CD14-positive monocyte (primary cell): ENCODE measurements at regions of chr2 and their contacts with region 1.

Region 1: GRCh38 chr2:46364797-46365457 is 67.7 kb downstream of the EPAS1 start:
- DNase-seq: peak; percentile 30 to 46 (median 33)
- H3K4me3 ChIP-seq: no peak overlapping the region
- H3K4me3 Mint-ChIP-seq: no peak overlapping the region
- H3K27ac ChIP-seq: no peak overlapping the region
- H3K27ac Mint-ChIP-seq: no peak overlapping the region
- H3K4me1 ChIP-seq: peaks cover 11 to 12% of the 10 kb centered on the region in 2 donors
- H3K4me1 Mint-ChIP-seq: peaks cover 27% of the 10 kb centered on the region
- H3K27me3 ChIP-seq: no peaks in the 10 kb centered on the region
- H3K27me3 Mint-ChIP-seq: peaks cover 0 to 3% (median 2%) of the 10 kb centered on the region in 3 donors
- CTCF ChIP-seq: peak; percentile 90

Region 2: GRCh38 chr2:46002507-46002883 is 362.4 kb before region 1 on chr2:
- intact Hi-C with region 1: loop called in 1 of 2 experiments (anchors 10 kb)
- DNase-seq: no peak
- H3K4me3 ChIP-seq: no peak overlapping the region
- H3K4me3 Mint-ChIP-seq: no peak overlapping the region
- H3K27ac ChIP-seq: no peak overlapping the region
- H3K27ac Mint-ChIP-seq: no peak overlapping the region
- H3K4me1 ChIP-seq: no peaks in the 10 kb centered on the region
- H3K4me1 Mint-ChIP-seq: no peaks in the 10 kb centered on the region
- H3K27me3 ChIP-seq: no peaks in the 10 kb centered on the region
- H3K27me3 Mint-ChIP-seq: no peaks in the 10 kb centered on the region
- CTCF ChIP-seq: no peak

Region 3: DNA sequence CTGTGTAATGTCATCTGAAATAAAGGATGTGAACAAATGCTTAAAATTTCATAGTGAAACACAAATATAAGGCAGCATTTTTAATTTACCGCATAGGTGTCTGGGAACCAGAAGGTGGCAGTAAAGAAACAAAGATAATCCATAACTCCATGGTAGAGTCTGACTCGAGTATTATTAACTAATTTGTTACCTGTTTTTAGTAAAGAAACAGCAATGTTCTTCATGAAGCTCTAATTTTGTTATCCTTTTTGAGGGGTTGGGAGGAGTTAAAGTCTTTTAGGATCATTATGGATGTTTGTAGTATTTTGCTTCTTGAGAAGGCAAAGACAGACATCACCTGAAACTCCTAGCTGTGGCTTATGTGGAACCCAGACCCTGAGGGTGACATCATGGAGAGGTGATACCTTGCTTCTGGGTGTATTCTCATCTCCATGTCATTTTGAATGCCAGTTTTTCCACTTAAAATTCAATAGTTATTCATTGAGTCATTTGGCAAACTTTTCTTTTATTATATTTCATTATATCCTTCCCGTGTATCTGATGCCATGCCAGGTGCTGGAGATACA is 353.9 kb before region 1 on chr2:
- intact Hi-C with region 1: loop called (anchors 10 kb)
- DNase-seq: peak in 2 of 3 donors; percentile 11 to 24
- H3K4me3 ChIP-seq: no peak overlapping the region
- H3K4me3 Mint-ChIP-seq: no peak overlapping the region
- H3K27ac ChIP-seq: no peak overlapping the region
- H3K27ac Mint-ChIP-seq: peak overlapping the region in 1 of 7 donors; percentile 36
- H3K4me1 ChIP-seq: no peaks in the 10 kb centered on the region
- H3K4me1 Mint-ChIP-seq: no peaks in the 10 kb centered on the region
- H3K27me3 ChIP-seq: no peaks in the 10 kb centered on the region
- H3K27me3 Mint-ChIP-seq: no peaks in the 10 kb centered on the region
- CTCF ChIP-seq: peak; percentile 57

Region 4: DNA sequence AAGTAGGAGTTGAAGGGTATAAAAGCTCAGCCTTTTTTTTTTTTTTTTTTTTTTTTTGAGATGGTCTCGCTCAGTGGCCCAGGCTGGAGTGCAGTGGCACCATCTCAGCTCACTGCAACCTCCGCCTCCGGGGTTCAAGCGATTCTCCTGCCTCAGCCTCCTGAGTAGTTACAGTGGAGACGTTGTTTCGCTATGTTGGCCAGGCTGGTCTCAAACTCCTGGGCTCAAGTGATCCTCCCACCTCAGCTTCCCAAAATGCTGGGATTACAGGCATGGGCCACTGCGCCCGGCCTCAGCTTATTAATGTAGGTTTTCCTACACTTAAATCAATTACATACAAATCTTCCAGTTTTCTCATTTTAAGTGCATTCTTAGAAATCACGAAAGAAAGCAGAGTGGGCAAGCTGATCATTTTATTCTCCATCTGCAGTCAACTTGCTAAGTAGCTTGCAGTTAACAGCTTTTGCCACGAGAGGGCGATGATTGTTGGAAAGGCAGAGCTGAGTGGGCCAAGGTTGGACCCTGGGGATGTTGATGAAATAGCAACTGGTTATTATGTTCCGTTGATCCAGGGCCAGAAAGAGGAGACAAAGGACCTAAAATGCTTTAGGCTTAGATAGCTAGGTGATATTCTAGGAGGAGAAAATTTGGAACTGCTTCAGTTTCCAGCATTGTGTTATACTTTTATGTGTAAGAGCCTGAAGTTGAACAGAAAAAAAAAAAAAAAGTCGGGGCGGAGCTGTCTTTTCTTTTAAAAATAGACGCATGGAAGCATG is 302.1 kb before region 1 on chr2:
- intact Hi-C with region 1: loop called in 1 of 2 experiments (anchors 5 kb)
- DNase-seq: peak; percentile 56 to 65 (median 65)
- H3K4me3 ChIP-seq: no peak overlapping the region
- H3K4me3 Mint-ChIP-seq: peak overlapping the region in 1 of 2 donors; percentile 39
- H3K27ac ChIP-seq: no peak overlapping the region
- H3K27ac Mint-ChIP-seq: no peak overlapping the region
- H3K4me1 ChIP-seq: no peaks in the 10 kb centered on the region
- H3K4me1 Mint-ChIP-seq: peaks cover 3% of the 10 kb centered on the region
- H3K27me3 ChIP-seq: no peaks in the 10 kb centered on the region
- H3K27me3 Mint-ChIP-seq: peaks cover 0 to 1% (median 0%) of the 10 kb centered on the region in 3 donors
- CTCF ChIP-seq: peak; percentile 89

Region 5: GRCh38 chr2:46134531-46135181 is 230.3 kb before region 1 on chr2:
- intact Hi-C with region 1: no loop called
- DNase-seq: no peak
- H3K4me3 ChIP-seq: no peak overlapping the region
- H3K4me3 Mint-ChIP-seq: no peak overlapping the region
- H3K27ac ChIP-seq: no peak overlapping the region
- H3K27ac Mint-ChIP-seq: no peak overlapping the region
- H3K4me1 ChIP-seq: no peaks in the 10 kb centered on the region
- H3K4me1 Mint-ChIP-seq: peaks cover 5% of the 10 kb centered on the region
- H3K27me3 ChIP-seq: no peaks in the 10 kb centered on the region
- H3K27me3 Mint-ChIP-seq: peaks cover 0 to 1% (median 0%) of the 10 kb centered on the region in 3 donors
- CTCF ChIP-seq: no peak

Region 6: DNA sequence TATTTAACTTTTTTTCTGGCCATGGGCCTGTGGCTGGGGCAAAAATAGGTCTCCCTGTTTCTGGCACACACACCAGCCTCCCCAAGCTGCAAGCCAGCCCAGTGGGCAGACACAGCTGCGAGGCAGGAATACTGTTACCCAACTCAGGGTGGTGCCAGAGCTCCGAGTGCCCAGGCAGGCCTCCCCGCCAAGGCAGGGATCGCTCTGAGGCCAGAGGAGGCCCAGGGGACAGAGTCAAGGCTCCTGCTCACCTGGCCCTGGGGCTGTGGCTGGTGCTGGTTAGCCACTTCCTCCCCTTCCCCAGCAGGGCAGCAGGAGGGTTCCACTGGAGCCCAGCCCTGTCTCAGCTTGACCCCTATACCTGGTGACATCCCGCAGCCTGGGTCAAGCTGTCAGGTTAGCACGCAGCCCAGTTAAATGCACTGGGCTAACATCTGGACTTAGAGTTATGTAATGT is 134.8 kb before region 1 on chr2:
- intact Hi-C with region 1: loop called in 1 of 2 experiments (anchors 10 kb)
- DNase-seq: peak in 2 of 3 donors; percentile 24 to 33
- H3K4me3 ChIP-seq: no peak overlapping the region
- H3K4me3 Mint-ChIP-seq: no peak overlapping the region
- H3K27ac ChIP-seq: no peak overlapping the region
- H3K27ac Mint-ChIP-seq: peak overlapping the region in 3 of 7 donors; percentile 30 to 33 (median 31)
- H3K4me1 ChIP-seq: peaks cover 12 to 19% of the 10 kb centered on the region in 2 donors
- H3K4me1 Mint-ChIP-seq: peaks cover 16% of the 10 kb centered on the region
- H3K27me3 ChIP-seq: peaks cover 3 to 14% of the 10 kb centered on the region in 2 donors
- H3K27me3 Mint-ChIP-seq: peaks cover 18 to 36% (median 26%) of the 10 kb centered on the region in 3 donors
- CTCF ChIP-seq: peak; percentile 15